OCI-LY7 (cell line): ENCODE measurements at regions of chr22 and their contacts with region 1.

Region 1: DNA sequence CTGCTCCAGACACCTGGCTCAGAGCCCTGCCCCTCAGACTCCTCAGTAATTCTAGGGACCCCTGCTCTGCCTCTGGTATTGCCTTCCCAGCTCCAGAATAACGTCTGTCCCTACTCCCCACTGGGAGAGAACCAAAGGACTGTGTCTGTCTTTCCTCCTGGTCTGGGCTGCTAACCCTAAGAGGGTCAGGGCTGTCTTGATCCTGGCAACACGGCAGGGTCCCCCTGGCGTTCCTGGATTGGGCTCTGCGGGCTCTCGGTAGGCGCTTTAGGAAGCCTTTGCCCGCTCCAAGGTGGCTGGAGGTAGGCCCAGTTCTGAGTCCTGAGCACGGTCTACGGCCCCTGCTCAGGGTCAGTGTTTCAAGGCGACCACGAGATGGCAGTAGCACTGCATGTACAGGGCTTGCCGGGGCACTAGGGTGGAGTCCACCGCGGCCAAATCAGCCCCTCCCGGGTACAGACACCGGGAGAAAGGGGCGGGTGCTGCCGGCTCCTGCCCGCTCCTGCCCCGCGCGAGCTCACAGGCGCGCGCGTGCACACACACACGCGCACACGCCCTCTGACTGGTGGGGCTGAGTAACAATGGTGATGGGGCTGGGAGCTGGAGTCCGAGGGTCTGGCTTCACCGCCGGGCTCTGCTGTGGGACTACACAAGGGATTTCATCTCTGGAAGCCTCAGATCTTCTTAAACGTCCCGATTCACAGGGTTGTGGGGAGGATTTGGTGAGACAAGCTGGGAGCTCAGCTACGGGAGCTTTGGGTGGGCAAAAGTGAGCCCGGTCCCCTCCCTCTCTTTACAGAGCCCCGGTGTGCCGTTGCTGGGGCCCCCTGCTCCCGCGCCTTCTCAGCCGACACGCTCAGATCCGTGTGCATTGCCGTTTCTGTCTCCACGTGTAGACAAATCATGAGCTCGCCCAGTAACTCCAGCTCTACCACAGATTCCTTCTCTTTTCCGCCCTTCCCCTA is 30.1 kb upstream of the HMOX1 start:
- DNase-seq: peak; percentile 93
- H3K4me3 ChIP-seq: peak overlapping the region; percentile 64
- H3K27ac ChIP-seq: peak overlapping the region; percentile 95
- H3K4me1 ChIP-seq: peaks cover 64% of the 10 kb centered on the region
- CTCF ChIP-seq: peak; percentile 80

Region 2: DNA sequence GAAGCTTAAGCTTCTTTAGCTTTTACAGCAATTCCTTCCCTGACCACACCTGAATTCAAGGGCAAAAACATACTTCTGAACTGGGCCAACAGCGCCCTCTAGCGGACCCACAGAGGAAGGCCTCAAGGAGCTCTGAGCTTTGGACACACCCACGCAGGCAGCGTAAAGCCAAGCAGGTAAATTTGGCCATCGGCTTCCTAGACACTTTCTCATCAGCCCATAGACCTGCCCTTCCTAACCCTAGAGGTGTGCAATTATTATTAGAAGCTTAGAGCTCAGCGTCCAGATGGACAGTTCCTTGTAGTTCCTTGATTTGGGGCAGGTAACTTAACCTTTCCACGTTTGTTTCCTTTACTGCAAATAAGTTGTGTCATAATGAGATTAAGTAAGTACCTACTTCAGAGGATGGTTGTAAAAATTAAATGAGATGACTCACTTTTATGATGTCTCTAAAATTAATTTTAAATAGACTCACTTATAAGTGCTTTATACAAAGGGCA is 119.2 kb before region 1 on chr22:
- CTCF ChIA-PET with region 1: no interaction called
- POLR2A ChIA-PET with region 1: no interaction called
- intact Hi-C with region 1: no loop called
- DNase-seq: peak; percentile 83
- H3K4me3 ChIP-seq: no peak overlapping the region
- H3K27ac ChIP-seq: no peak overlapping the region
- H3K4me1 ChIP-seq: peaks cover 3% of the 10 kb centered on the region
- CTCF ChIP-seq: peak; percentile 99

Region 3: GRCh38 chr22:35308480-35309021 is 42.3 kb before region 1 on chr22:
- CTCF ChIA-PET with region 1: no interaction called
- POLR2A ChIA-PET with region 1: interaction called, 3 read pairs
- intact Hi-C with region 1: loop called (anchors 2 kb)
- DNase-seq: peak; percentile 36
- H3K4me3 ChIP-seq: no peak overlapping the region
- H3K27ac ChIP-seq: peak overlapping the region; percentile 14
- H3K4me1 ChIP-seq: peaks cover 55% of the 10 kb centered on the region
- CTCF ChIP-seq: no peak

Region 4: DNA sequence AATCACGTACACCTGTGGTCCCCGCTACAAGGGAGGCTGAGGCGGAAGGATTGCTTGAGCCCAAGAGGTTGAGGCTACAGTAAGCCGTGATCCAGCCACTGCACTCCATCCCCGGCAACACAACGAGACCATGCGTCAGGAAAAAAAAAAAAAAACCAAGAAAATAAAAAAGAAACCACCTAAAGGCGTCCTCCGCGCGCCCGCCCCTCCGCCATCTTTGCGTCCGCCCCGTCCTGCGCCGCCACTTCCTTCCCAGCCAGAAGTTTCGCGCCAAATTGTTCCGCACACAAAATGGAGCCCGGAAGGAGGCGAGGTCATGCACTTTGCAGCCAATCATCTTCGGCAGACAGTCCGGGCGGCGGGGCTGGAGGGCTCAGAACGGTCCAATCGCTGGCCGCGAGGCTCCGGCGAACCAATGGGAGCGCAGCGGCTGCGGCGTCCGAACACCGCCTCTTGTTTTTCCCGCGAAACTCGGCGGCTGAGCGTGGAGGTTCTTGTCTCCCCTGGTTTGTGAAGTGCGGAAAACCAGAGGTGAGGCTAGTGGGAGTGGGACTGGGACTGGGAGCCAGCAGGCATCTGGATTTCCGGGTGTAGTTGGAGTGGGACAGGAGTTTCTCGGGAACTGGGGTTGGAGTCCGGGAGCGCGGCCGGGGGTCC is 49.0 kb after region 1 on chr22 and contains the start of gene MCM5:
- CTCF ChIA-PET with region 1: interaction called, 4 read pairs
- POLR2A ChIA-PET with region 1: interaction called, 7 read pairs
- intact Hi-C with region 1: loop called (anchors 1 kb)
- DNase-seq: peak; percentile 99
- H3K4me3 ChIP-seq: peak within 1 kb of the TSS; percentile 79
- H3K27ac ChIP-seq: peak within 1 kb of the TSS; percentile 86
- H3K4me1 ChIP-seq: peaks cover 67% of the 10 kb centered on the region
- CTCF ChIP-seq: no peak
- total RNA-seq, gene MCM5: 178 and 242 TPM in 2 replicates

Region 5: GRCh38 chr22:35582861-35583670 is 232.2 kb after region 1 on chr22:
- CTCF ChIA-PET with region 1: interaction called, 3 read pairs
- POLR2A ChIA-PET with region 1: no interaction called
- intact Hi-C with region 1: loop called (anchors 1 kb)
- DNase-seq: peak; percentile 77
- H3K4me3 ChIP-seq: no peak overlapping the region
- H3K27ac ChIP-seq: no peak overlapping the region
- H3K4me1 ChIP-seq: no peaks in the 10 kb centered on the region
- CTCF ChIP-seq: peak; percentile 99

Region 6: DNA sequence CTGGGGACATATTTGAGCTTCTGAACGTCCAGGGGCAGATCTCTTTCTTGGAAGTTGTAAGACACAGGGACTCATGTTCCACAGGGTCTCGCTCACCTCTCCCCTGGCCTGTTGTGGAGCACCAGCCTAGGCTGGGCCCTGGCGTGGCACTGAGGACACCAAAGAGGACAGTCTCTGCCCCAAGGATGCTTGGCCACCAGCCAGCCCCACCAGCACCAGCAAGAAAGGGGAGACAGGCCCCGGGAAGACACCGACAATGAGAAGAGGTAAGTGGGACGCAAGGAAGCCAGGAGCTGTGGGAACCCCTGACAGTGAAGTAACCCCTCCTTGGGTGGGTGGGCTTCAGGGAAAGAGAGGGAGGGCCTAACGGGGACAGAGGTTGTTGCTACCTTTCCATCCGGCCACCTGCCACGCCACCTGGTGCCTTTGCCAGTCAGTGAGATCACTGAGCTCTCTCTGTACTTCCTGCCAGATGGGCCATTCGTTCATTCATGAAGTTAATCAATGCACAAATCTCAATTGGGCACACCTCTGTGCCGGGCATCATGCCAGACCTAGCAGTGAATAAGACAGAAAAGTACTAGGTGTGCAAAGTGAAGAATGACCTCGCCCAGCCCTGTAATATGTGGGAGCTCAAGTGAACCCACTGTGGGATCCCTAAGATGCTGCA is 378.0 kb after region 1 on chr22:
- CTCF ChIA-PET with region 1: no interaction called
- POLR2A ChIA-PET with region 1: no interaction called
- intact Hi-C with region 1: loop called (anchors 10 kb)
- DNase-seq: peak; percentile 91
- H3K4me3 ChIP-seq: peak overlapping the region; percentile 67
- H3K27ac ChIP-seq: peak overlapping the region; percentile 91
- H3K4me1 ChIP-seq: peaks cover 68% of the 10 kb centered on the region
- CTCF ChIP-seq: peak; percentile 42

Region 7: DNA sequence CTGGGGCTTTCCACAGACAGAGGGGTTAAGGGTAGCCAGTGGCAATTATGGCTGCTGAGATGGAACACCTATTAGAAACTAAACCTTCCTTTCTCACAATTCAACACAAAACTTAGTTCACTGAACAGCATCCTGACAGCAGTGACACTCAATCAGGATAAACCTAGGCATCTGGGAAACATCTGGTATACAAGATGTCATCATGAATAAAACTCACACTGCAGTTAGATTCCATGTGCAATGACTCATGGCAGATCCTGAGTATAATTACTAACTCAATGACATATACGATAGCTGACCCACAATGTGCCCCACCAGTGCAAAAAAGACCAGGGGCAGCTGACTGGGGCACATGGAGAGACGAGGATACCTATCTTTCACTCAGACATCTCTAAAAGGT is 660.1 kb after region 1 on chr22:
- CTCF ChIA-PET with region 1: no interaction called
- POLR2A ChIA-PET with region 1: no interaction called
- intact Hi-C with region 1: loop called (anchors 10 kb)
- DNase-seq: no peak
- H3K4me3 ChIP-seq: no peak overlapping the region
- H3K27ac ChIP-seq: no peak overlapping the region
- H3K4me1 ChIP-seq: peaks cover 82% of the 10 kb centered on the region
- CTCF ChIP-seq: no peak